ENCODE measurements at regions of chr19 and their contacts with region 1.

Region 1: DNA sequence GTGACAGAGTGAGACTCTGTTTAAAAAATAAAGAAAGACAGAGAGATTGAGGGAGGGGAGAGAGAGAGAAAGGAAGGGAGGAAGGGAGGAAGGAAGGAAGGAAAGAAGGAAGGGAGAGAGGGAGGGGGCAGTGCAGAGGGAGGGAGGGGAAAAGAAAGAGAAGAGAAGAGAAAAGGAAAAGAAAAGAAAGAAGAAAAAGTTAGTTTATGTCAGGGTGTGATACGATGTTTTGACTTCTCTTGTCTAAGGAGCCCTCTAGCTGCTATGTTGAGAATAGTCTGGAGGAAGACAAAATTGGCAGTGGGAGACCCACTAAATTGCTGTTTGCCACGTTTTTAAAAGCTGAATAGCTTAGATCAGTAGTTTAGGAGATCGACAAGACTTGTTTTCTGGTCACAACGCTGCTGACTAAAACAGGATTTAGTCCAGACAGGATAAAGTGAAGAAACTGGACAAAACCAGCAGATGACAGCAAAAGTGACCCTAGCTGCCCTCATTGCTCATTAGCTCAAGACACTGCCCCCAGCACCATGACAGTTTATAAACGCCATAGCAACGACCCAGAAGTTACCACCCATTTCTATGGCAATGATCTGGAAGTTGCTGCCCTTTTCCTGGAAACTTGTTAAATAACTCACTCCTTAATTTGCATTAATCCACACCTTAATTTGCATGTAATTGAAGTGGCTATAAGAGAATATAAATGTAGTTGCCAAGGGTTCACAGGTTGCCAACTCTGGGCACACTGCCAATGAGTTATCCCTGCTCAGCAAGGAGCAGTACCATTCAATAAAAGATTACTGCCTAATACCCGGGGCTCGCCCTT is 11.1 kb downstream of the TEX101 start:
- DNase-seq: no peak
- ATAC-seq: no peak
- H3K4me3 Mint-ChIP-seq: no peak overlapping the region
- H3K27ac Mint-ChIP-seq: no peak overlapping the region
- H3K4me1 Mint-ChIP-seq: peaks cover 8% of the 10 kb centered on the region
- H3K27me3 Mint-ChIP-seq: no peaks in the 10 kb centered on the region
- CTCF ChIP-seq: no peak

Region 2: GRCh38 chr19:43229315-43229714 is 196.5 kb before region 1 on chr19:
- CTCF ChIA-PET with region 1: no interaction called
- POLR2A ChIA-PET with region 1: no interaction called
- intact Hi-C with region 1: no loop called
- DNase-seq: no peak
- ATAC-seq: no peak
- H3K4me3 Mint-ChIP-seq: no peak overlapping the region
- H3K27ac Mint-ChIP-seq: no peak overlapping the region
- H3K4me1 Mint-ChIP-seq: no peaks in the 10 kb centered on the region
- H3K27me3 Mint-ChIP-seq: no peaks in the 10 kb centered on the region
- CTCF ChIP-seq: no peak

Region 3: DNA sequence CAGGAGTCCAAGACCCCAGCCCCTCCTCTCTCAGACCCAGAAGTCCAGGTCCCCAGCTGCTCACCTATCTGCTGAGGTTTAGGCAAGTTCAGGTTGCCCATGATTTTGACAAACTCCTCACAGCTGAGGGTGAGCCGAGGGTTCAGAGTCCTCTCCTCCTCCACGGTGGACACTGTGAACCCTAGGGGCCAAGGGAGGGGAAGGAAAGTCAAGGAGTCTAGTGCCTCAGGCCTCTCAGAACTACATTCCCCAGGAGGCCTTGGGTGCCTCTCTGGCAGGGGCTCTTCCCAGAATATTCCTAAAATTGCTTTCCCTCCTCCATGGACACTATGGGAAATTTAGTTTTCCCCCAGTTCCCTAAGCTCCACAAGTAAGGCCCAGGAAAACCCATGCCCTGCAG is 82.1 kb after region 1 on chr19:
- CTCF ChIA-PET with region 1: no interaction called
- POLR2A ChIA-PET with region 1: no interaction called
- intact Hi-C with region 1: no loop called
- DNase-seq: no peak
- ATAC-seq: no peak
- H3K4me3 Mint-ChIP-seq: no peak overlapping the region
- H3K27ac Mint-ChIP-seq: no peak overlapping the region
- H3K4me1 Mint-ChIP-seq: peaks cover 18% of the 10 kb centered on the region
- H3K27me3 Mint-ChIP-seq: no peaks in the 10 kb centered on the region
- CTCF ChIP-seq: no peak

Region 4: DNA sequence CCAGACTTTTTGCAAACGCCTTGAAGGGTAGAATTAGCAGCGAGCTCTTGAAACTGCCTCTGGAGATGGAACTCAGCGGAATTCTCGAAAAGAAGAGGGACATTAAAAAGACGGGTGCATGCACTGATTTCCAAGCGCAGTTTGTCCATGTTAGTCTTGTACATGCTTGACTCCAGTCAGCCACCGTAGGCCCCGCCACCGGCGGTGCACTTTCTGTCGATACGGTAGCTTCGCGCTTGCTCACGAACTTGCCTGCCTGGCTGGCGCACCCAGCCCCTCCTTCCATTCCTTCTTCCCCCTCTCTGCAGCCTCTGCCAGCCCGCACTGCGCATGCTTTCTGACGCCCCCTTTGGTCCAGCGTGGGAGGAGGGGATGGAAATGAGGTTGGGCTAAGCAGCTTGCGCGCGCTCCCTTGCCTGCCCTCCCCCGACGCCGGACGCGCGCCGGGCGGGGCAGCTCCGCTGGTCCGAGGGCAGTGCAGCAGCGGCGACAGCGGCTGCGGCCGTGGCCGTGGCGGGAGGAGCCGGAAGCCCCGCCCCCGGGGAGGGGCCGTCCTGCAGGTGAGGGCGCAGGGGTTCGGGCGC is 107.3 kb after region 1 on chr19 and contains the start of gene ZNF575:
- CTCF ChIA-PET with region 1: no interaction called
- POLR2A ChIA-PET with region 1: interaction called, 10 read pairs
- intact Hi-C with region 1: no loop called
- DNase-seq: peak; percentile 77
- ATAC-seq: peak; percentile 45
- H3K4me3 Mint-ChIP-seq: peak within 1 kb of the TSS; percentile 97
- H3K27ac Mint-ChIP-seq: peak within 1 kb of the TSS; percentile 98
- H3K4me1 Mint-ChIP-seq: peaks cover 19% of the 10 kb centered on the region
- H3K27me3 Mint-ChIP-seq: no peaks in the 10 kb centered on the region
- CTCF ChIP-seq: no peak
- total RNA-seq, gene ZNF575: 1.9 and 3.4 TPM in 2 replicates

Measured in activated B cell treated with CpG ODN at 0.5 μM for 24 hours (primary cell).